Activated CD4-positive, alpha-beta T cell treated with anti-CD3 and anti-CD28 coated beads for 36 hours (primary cell): ENCODE measurements at regions of chr11 and their contacts with region 1.

Region 1: GRCh38 chr11:111538407-111539114 is 2.0 kb upstream of the LAYN start:
- DNase-seq: no peak
- ATAC-seq: peak; percentile 74
- H3K4me3 Mint-ChIP-seq: no peak overlapping the region
- H3K27ac Mint-ChIP-seq: peak overlapping the region; percentile 83
- H3K4me1 Mint-ChIP-seq: peaks cover 27% of the 10 kb centered on the region
- H3K27me3 Mint-ChIP-seq: peaks cover 54% of the 10 kb centered on the region

Region 2: DNA sequence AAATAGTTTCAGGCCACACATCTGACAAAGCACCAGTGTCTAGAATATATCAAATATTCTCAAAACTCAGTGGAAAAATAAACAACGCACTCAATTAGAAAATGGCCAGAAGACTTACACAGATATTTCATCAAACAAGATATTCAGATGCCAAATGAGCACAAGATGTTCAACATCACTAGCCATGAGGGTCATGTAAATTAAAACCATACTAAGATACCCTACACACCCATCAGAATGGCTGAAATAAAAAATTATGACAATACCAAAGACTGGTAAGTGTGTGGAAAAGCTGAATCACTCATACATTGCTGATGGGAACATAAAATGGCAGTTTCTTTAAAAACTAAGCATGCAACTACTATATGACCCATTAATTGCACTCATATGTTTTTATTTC is 48.1 kb before region 1 on chr11:
- CTCF ChIA-PET with region 1: no interaction called
- POLR2A ChIA-PET with region 1: no interaction called
- intact Hi-C with region 1: no loop called
- DNase-seq: no peak
- ATAC-seq: no peak
- H3K4me3 Mint-ChIP-seq: no peak overlapping the region
- H3K27ac Mint-ChIP-seq: no peak overlapping the region
- H3K4me1 Mint-ChIP-seq: no peaks in the 10 kb centered on the region
- H3K27me3 Mint-ChIP-seq: peaks cover 27% of the 10 kb centered on the region

Region 3: GRCh38 chr11:111526501-111526900 is 12.1 kb before region 1 on chr11:
- CTCF ChIA-PET with region 1: no interaction called
- POLR2A ChIA-PET with region 1: interaction called, 4 read pairs
- intact Hi-C with region 1: loop called in 1 of 2 experiments (anchors 1 kb)
- DNase-seq: peak; percentile 65
- ATAC-seq: peak; percentile 66
- H3K4me3 Mint-ChIP-seq: no peak overlapping the region
- H3K27ac Mint-ChIP-seq: peak overlapping the region; percentile 67
- H3K4me1 Mint-ChIP-seq: peaks cover 65% of the 10 kb centered on the region
- H3K27me3 Mint-ChIP-seq: peaks cover 3% of the 10 kb centered on the region